Uterus (tissue), 4 donors: ENCODE measurements at regions of chr19 and their contacts with region 1.

Region 1: GRCh38 chr19:11164879-11165406 is 9.4 kb upstream of the SPC24 start:
- DNase-seq: peak; percentile 92 to 96
- H3K4me3 ChIP-seq: no peak overlapping the region
- H3K27ac ChIP-seq: peak overlapping the region; percentile 93 to 96
- H3K4me1 ChIP-seq: peaks cover 24 to 31% of the 10 kb centered on the region in 2 donors
- H3K27me3 ChIP-seq: no peaks in the 10 kb centered on the region
- CTCF ChIP-seq: peak in 1 of 4 experiments; percentile 4
- POLR2A ChIP-seq: peak in 1 of 2 donors; percentile 25

Region 2: DNA sequence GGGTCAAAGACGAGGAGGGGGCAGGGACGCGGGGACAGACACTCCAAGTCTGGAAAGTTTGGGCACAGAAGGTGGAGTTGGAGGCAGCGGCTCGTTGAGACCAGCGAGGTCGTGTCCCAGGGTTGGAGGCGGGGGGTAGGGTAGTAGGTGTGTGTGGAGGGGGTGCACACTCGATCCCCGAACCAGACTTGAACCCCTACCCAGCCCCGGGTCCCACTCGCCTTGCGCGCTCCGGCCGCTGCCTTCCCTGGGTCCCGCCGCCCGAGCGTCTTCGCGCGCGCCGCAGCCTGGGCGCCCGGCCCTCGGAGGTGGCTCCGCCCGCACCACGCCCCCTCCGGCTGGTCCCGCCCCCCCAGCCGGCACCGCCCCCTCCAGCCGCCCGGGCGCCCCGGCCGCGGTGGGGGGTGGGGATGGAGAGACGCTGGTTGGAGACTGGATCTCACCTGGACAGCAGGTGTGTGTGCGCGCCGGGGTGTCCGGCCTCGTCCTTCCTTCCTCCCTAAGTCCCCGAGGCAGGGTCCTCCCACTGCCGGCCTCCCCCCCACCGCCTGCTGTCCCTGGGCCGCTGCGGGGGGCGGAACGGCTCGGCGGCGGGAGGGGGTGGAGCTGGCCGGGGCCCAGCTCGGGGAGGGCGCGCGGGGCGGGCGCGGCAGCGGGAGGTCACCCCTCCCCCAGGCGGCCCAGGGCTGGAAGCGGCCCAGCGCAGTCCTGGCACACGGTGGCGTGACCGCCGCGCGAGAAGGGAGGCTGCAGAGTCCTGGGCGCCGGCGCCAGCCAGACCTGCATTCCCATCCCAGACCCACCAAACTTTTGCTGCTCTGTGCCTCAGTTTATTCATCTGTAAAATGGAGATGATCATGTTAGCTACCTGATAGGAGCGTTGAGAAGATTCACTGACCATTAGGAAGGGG is 32.6 kb after region 1 on chr19 and contains the start of gene KANK2:
- intact Hi-C with region 1: loop called (anchors 5 kb)
- DNase-seq: peak; percentile 86 to 89
- H3K4me3 ChIP-seq: peak within 1 kb of the TSS; percentile 51 to 94
- H3K27ac ChIP-seq: peak within 1 kb of the TSS; percentile 98 to 99
- H3K4me1 ChIP-seq: peaks cover 8 to 16% of the 10 kb centered on the region in 2 donors
- H3K27me3 ChIP-seq: no peaks in the 10 kb centered on the region
- CTCF ChIP-seq: peak in 1 of 4 experiments; percentile 18
- POLR2A ChIP-seq: peak; percentile 83 to 96
- total RNA-seq, gene KANK2: 326 to 762 (median 535) TPM

Region 3: DNA sequence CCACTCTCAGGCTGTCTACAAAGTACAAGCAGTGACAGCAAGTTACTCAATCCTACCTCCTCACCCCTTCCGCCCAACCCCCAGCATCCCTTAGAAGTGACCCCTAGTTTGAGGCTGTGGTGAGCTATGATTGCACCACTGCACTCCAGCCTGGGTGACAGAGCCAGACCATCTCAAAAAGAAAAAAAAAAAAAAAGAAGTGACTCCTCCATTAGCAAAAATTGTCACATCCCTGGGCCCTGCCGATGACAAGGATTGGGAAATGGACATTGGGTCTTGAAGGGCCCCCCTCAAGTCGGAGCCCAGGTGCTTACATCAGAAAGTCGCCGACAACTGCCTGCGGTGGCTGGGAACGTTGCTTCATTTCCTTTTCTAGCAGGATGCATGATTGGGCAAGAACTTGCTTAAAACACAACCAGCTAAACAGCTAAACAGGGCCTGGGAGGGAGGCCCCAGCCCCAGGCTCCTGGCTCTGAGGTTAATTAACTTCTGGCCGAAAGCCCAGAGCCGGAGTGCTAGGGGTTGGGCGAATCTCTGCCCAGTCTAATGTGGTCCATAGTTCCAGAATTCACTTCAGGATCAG is 159.2 kb after region 1 on chr19:
- intact Hi-C with region 1: no loop called
- DNase-seq: peak; percentile 81 to 91
- H3K4me3 ChIP-seq: no peak overlapping the region
- H3K27ac ChIP-seq: peak overlapping the region; percentile 80 to 89
- H3K4me1 ChIP-seq: peaks cover 0 to 4% of the 10 kb centered on the region in 2 donors
- H3K27me3 ChIP-seq: no peaks in the 10 kb centered on the region
- CTCF ChIP-seq: no peak
- POLR2A ChIP-seq: no peak